ENCODE measurements at regions of chrX and their contacts with region 1.

Region 1: GRCh38 chrX:120468825-120469525 is at the start of gene LAMP2:
- DNase-seq: peak; percentile 61 to 94
- H3K4me3 ChIP-seq: peak within 1 kb of the TSS; percentile 64 to 79
- H3K27ac ChIP-seq: peak within 1 kb of the TSS; percentile 83 to 88
- H3K4me1 ChIP-seq: no peaks in the 10 kb centered on the region
- H3K27me3 ChIP-seq: no peaks in the 10 kb centered on the region
- CTCF ChIP-seq: no peak
- total RNA-seq, gene LAMP2: 60.1 TPM

Region 2: GRCh38 chrX:120250522-120251271 is 218.3 kb before region 1 on chrX and contains the start of gene ZBTB33:
- intact Hi-C with region 1: loop called (anchors 5 kb)
- DNase-seq: peak; percentile 66 to 95
- H3K4me3 ChIP-seq: peak within 1 kb of the TSS; percentile 57 to 63
- H3K27ac ChIP-seq: peak within 1 kb of the TSS; percentile 87 to 93
- H3K4me1 ChIP-seq: no peaks in the 10 kb centered on the region
- H3K27me3 ChIP-seq: no peaks in the 10 kb centered on the region
- CTCF ChIP-seq: peak; percentile 61 to 64 (median 62)
- total RNA-seq, gene ZBTB33: 3.6 TPM

Region 3: GRCh38 chrX:120485638-120486520 is 16.9 kb after region 1 on chrX:
- intact Hi-C with region 1: loop called (anchors 1 kb)
- DNase-seq: peak; percentile 17 to 83
- H3K4me3 ChIP-seq: peak overlapping the region; percentile 38 to 67
- H3K27ac ChIP-seq: peak overlapping the region; percentile 65 to 84
- H3K4me1 ChIP-seq: no peaks in the 10 kb centered on the region
- H3K27me3 ChIP-seq: no peaks in the 10 kb centered on the region
- CTCF ChIP-seq: peak in 2 of 3 experiments; percentile 28 to 56